Activated CD4-positive, alpha-beta memory T cell treated with anti-CD3 and anti-CD28 coated beads, Interleukin-2, amount 10 ng/mL, durations not matched to agents 7 days and 5 days (primary cell): ENCODE measurements at regions of chr3 and their contacts with region 1.

Region 1: DNA sequence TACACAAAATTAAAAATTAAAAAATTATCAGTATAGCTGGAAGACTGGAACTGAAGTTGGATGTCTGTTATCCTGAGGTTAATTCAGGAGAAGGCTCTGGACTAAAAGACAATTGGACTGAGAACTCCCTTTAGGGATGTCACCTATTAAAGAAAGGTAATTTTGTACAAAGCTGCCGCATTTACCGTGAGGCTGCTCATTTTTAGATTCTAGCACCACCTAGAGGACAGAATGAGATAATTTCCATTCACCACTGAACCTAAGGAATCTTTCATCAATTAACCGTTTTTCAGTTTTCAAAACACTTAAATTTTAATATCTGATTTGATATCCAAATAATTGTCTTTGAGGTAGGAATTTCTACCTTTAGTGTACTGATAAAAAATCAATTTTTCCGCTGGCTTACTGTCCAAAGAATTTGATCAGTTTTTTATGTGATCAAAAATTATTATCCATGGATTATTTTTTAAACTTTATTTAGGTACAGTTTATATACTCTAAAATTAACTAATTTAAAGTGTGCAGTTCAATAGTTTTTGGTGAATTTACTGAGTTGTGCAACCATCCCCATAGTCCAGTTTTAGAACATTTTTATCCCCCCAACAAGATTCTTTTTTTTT is 106.7 kb upstream of the TNIK start:
- DNase-seq: no peak
- H3K4me3 Mint-ChIP-seq: no peak overlapping the region
- H3K27ac Mint-ChIP-seq: no peak overlapping the region
- H3K4me1 Mint-ChIP-seq: peaks cover 22% of the 10 kb centered on the region
- H3K27me3 Mint-ChIP-seq: peaks cover 12% of the 10 kb centered on the region

Region 2: DNA sequence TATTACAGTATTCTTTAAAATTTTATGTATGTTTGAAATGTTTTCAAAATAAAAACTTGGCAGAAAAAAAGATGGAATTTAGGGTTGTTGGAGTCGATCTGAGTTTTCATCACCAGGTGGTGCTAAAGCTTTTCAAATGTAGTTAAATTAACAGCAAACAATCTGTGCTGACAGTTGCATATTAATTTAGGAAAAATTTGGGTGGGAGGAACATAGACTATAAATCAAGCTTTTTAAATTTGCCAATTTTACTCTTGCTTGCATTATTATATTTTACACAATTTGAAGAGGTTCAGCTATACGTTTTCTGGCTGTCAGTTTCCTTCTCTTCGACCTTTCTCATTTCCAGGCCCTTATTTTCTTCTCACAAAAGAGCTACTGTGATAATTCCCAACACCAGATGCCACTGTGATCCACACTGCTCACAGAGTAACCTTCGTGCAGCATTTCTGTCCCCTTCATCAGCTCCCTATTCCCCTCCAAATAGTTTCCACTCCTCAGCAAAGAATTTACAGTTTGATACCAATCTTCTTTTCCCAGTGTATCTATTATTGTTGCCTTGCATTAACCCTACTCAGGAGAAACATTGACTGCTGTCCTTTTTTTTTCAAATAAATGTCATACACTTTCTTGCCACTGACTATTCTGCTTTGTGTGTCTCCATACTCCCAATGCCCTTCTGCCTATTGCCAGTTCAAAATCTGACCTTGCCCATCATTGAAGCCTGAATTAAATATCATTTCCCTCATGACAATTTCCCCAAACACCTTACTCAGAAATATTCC is 605.1 kb before region 1 on chr3:
- CTCF ChIA-PET with region 1: interaction called, 19 read pairs
- POLR2A ChIA-PET with region 1: no interaction called
- DNase-seq: no peak
- H3K4me3 Mint-ChIP-seq: no peak overlapping the region
- H3K27ac Mint-ChIP-seq: no peak overlapping the region
- H3K4me1 Mint-ChIP-seq: no peaks in the 10 kb centered on the region
- H3K27me3 Mint-ChIP-seq: peaks cover under 1% of the 10 kb centered on the region

Region 3: GRCh38 chr3:171049861-171050444 is 517.0 kb before region 1 on chr3:
- CTCF ChIA-PET with region 1: interaction called, 26 read pairs
- POLR2A ChIA-PET with region 1: interaction called, 4 read pairs
- DNase-seq: peak; percentile 55
- H3K4me3 Mint-ChIP-seq: no peak overlapping the region
- H3K27ac Mint-ChIP-seq: no peak overlapping the region
- H3K4me1 Mint-ChIP-seq: no peaks in the 10 kb centered on the region
- H3K27me3 Mint-ChIP-seq: peaks cover 4% of the 10 kb centered on the region

Region 4: GRCh38 chr3:171162986-171163723 is 403.8 kb before region 1 on chr3:
- CTCF ChIA-PET with region 1: interaction called, 40 read pairs
- POLR2A ChIA-PET with region 1: interaction called, 5 read pairs
- DNase-seq: no peak
- H3K4me3 Mint-ChIP-seq: no peak overlapping the region
- H3K27ac Mint-ChIP-seq: peak overlapping the region; percentile 3
- H3K4me1 Mint-ChIP-seq: peaks cover 21% of the 10 kb centered on the region
- H3K27me3 Mint-ChIP-seq: no peaks in the 10 kb centered on the region

Region 5: GRCh38 chr3:171187706-171188290 is 379.1 kb before region 1 on chr3:
- CTCF ChIA-PET with region 1: interaction called, 29 read pairs
- POLR2A ChIA-PET with region 1: no interaction called
- DNase-seq: no peak
- H3K4me3 Mint-ChIP-seq: no peak overlapping the region
- H3K27ac Mint-ChIP-seq: no peak overlapping the region
- H3K4me1 Mint-ChIP-seq: peaks cover 65% of the 10 kb centered on the region
- H3K27me3 Mint-ChIP-seq: no peaks in the 10 kb centered on the region

Region 6: GRCh38 chr3:171328419-171329082 is 238.4 kb before region 1 on chr3:
- CTCF ChIA-PET with region 1: interaction called, 10 read pairs
- POLR2A ChIA-PET with region 1: no interaction called
- DNase-seq: peak; percentile 69
- H3K4me3 Mint-ChIP-seq: no peak overlapping the region
- H3K27ac Mint-ChIP-seq: peak overlapping the region; percentile 50
- H3K4me1 Mint-ChIP-seq: peaks cover 19% of the 10 kb centered on the region
- H3K27me3 Mint-ChIP-seq: no peaks in the 10 kb centered on the region